ENCODE measurements at regions of chr2 and their contacts with region 1.

Region 1: DNA sequence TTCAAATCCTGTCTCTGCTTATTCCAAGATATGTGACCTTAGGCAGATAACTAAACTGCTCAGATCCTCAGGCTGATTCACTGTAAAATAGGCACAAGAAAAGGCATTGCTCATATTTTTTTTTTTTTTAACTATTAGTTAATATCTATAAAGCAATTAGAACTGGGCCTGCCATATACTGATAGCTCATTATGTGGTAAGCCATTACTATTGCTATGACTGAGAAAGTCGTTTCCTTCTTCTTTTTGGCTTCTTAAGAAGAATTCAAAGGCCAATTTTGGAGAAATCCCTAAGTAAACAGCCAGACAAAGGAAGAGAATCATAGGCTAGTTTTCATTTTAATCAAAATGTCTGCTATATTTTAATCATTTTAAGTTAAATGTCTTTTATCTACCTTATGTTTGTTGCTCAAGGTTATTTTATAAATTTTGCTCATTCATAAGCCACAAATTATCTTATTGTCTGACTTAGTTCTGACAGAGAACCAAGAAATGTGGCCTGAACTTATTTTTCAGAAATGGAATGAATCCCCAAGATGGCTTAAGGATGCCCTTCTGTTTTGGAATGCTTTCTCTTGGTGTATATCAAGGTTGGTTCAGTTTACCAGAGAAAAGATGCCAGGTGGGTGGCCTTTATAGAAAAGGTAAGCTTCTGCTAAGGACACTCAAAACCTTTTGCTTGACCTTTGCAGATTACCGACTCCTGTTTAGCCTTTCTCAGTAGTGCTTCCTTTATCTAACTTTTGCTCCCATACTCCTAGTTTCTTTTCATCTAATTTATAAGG is 21.3 kb upstream of the VRK2 start:
- DNase-seq: no peak
- ATAC-seq: no peak
- H3K4me3 ChIP-seq: no peak overlapping the region
- H3K4me3 Mint-ChIP-seq: no peak overlapping the region
- H3K27ac ChIP-seq: no peak overlapping the region
- H3K27ac Mint-ChIP-seq: no peak overlapping the region
- H3K4me1 ChIP-seq: peaks cover 9 to 19% of the 10 kb centered on the region in 2 donors
- H3K4me1 Mint-ChIP-seq: peaks cover 25% of the 10 kb centered on the region
- H3K27me3 ChIP-seq: no peaks in the 10 kb centered on the region
- H3K27me3 Mint-ChIP-seq: no peaks in the 10 kb centered on the region
- CTCF ChIP-seq: no peak

Region 2: DNA sequence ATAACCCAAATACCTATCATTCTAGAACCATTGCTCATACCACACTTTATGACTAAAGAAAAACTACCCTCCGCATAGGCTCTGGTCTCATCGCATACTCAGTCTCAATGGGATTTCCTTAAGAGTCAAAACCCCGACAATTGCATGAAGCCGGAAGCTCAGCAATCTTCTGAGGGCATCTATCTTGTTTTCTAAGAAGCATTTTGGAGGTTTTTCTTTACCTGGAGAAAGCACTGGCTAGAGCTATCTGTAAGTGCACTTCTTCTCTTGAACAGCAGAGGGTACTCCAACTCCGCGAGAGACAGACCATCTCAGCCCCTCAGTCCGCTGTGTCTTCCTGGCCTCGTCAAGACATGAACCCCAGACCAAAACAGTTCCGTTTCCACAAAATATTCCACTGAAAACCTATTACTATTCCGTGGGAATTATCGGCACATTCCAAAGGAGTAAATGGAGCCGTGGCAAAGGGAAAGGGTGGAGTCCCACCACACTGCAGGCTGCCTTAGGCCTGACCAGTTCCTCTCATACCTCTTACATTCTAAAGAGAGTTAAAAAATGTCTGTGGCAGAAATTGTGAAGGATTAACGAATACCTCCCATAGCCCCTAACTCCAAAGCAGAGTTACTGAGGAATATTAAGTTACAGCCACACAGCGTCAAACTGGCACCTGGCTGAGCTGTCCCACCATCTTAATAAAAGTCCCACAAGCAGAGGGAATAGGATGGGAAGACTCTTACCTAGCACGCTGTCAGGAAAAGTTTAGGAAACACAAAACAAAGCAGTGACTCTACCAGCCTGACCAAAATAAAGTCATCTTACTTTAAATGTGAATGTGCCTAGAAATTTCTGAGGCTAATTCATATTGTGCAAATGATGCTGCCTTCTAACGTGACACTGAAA is 304.4 kb before region 1 on chr2:
- CTCF ChIA-PET with region 1: no interaction called
- POLR2A ChIA-PET with region 1: no interaction called
- intact Hi-C with region 1: no loop called
- DNase-seq: peak; percentile 58
- ATAC-seq: peak; percentile 85
- H3K4me3 ChIP-seq: no peak overlapping the region
- H3K4me3 Mint-ChIP-seq: peak overlapping the region; percentile 47
- H3K27ac ChIP-seq: no peak overlapping the region
- H3K27ac Mint-ChIP-seq: no peak overlapping the region
- H3K4me1 ChIP-seq: peaks cover 5% of the 10 kb centered on the region in 2 donors
- H3K4me1 Mint-ChIP-seq: peaks cover 6% of the 10 kb centered on the region
- H3K27me3 ChIP-seq: no peaks in the 10 kb centered on the region
- H3K27me3 Mint-ChIP-seq: no peaks in the 10 kb centered on the region
- CTCF ChIP-seq: peak; percentile 88

Region 3: GRCh38 chr2:58039170-58039611 is 13.8 kb after region 1 on chr2:
- CTCF ChIA-PET with region 1: interaction called, 3 read pairs
- POLR2A ChIA-PET with region 1: interaction called, 3 read pairs
- intact Hi-C with region 1: loop called (anchors 2 kb)
- DNase-seq: peak; percentile 73
- ATAC-seq: peak; percentile 77
- H3K4me3 ChIP-seq: peak overlapping the region in 2 of 5 experiments; percentile 1 to 47
- H3K4me3 Mint-ChIP-seq: peak overlapping the region; percentile 62
- H3K27ac ChIP-seq: peak overlapping the region; percentile 46 to 73
- H3K27ac Mint-ChIP-seq: peak overlapping the region; percentile 54
- H3K4me1 ChIP-seq: peaks cover 21 to 27% of the 10 kb centered on the region in 2 donors
- H3K4me1 Mint-ChIP-seq: peaks cover 51% of the 10 kb centered on the region
- H3K27me3 ChIP-seq: no peaks in the 10 kb centered on the region
- H3K27me3 Mint-ChIP-seq: no peaks in the 10 kb centered on the region
- CTCF ChIP-seq: no peak

Region 4: DNA sequence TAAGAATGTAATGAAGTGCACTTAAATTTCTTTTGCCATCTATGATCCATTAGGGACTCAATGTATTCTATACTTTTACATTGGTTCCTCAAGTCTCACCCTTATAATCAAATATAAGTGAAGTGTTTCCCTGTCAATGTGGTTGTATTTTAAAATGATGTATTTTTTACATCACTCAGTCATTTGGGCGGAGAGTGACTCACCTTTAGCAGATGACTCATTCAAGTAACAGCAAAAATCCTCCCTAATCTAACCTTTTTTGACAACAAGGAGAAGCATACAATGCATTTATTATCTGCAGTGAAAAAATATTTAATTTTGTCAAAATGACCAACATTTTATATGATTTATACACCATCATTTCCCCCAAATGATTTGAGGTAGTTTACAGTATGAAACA is 121.4 kb after region 1 on chr2:
- CTCF ChIA-PET with region 1: no interaction called
- POLR2A ChIA-PET with region 1: no interaction called
- intact Hi-C with region 1: no loop called
- DNase-seq: no peak
- ATAC-seq: no peak
- H3K4me3 ChIP-seq: no peak overlapping the region
- H3K4me3 Mint-ChIP-seq: no peak overlapping the region
- H3K27ac ChIP-seq: no peak overlapping the region
- H3K27ac Mint-ChIP-seq: no peak overlapping the region
- H3K4me1 ChIP-seq: no peaks in the 10 kb centered on the region
- H3K4me1 Mint-ChIP-seq: no peaks in the 10 kb centered on the region
- H3K27me3 ChIP-seq: no peaks in the 10 kb centered on the region
- H3K27me3 Mint-ChIP-seq: no peaks in the 10 kb centered on the region
- CTCF ChIP-seq: no peak

Measured in B cell (primary cell).